ENCODE measurements at regions of chr4 and their contacts with region 1.

Region 1: DNA sequence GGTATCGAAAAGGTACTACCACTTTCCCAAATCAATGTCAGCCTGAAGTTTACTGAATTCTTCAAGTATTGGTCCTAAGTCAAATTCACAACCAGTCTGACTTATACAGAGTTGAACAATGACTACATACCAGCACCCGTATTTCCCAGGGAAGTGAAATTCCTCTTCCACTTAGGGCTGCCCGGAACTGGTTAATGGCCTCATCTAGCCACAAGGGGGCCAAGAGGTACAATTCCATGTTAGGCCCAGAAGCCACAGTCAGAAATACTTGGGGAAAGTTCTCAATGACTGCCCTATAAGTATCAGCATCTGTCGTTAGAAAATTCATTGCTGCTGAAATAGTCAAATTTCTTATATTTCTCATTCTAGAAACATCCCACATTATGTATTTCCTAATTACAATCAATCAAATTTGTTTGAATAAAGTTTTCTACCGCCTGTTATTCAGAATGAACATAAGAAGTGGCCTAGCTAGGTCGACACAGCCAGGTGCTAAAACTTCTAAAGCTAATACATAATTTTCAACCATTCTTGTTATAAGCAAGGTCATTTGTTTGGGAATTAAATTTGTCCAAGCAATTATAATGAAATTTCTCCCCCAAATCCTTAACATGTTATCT is 5.7 kb upstream of the PCDH7 start:
- DNase-seq: peak; percentile 49
- ATAC-seq: peak; percentile 52

Region 2: DNA sequence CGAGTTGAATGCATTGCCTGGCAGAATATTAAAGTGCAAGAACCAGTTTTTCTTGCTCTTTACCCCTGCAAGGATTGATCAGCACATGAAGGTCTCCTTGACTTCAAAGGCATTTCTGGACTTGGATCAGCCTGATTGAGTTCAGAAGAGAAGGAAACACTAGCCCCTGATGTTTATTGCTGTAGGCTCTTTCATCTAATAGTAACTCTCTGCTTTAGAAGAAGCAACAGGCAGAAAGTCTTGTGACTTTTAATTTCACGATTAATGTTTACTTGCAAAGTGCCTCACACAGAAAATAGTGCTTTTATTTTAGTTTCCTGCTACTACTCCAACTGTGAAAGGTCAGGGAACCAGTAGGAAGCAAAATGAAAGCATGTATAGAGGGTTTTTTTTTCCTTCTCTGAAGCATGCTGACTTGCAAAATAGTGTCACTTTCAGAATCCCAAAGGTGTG is 74.7 kb after region 1 on chr4:
- intact Hi-C with region 1: no loop called
- DNase-seq: no peak
- ATAC-seq: no peak

Region 3: GRCh38 chr4:31674313-31674947 is 959.9 kb after region 1 on chr4:
- intact Hi-C with region 1: loop called (anchors 10 kb)
- DNase-seq: no peak
- ATAC-seq: peak; percentile 41

Measured in Right ventricle myocardium superior (tissue), 1 donor.